H1 (cell line): ENCODE measurements at regions of chr5 and their contacts with region 1.

Region 1: DNA sequence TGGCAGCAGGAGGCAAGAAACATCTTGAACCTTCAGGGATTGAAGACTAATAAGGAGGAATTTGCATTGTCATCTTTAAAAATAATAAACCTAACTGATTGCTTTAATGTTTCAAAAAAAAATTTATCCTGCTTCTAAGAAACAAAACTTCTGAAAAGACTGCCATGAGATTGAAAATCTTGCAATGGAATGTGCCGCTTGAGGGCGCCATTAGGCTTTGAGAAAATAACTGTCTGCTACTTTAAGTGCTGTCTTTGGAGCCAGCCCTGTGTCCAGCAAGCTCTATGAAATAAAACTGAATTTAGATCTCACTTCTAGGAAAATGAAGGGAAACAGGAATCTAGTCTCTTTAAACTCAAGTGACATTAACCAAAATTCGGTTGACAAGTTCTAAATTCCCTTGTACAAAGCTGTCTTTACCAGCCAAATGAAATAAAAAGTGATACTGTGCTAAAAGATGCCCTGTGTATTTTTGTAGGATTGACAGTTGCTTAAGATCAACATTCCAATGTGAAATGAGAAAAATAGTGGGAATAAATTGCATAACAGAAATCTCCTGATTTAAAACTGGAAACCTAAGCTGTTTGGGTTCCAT is 79.4 kb downstream of the ESM1 start:
- DNase-seq: peak in 1 of 2 experiments; percentile 79
- H3K4me3 ChIP-seq: no peak overlapping the region
- H3K27ac ChIP-seq: no peak overlapping the region
- H3K4me1 ChIP-seq: no peaks in the 10 kb centered on the region
- H3K27me3 ChIP-seq: no peaks in the 10 kb centered on the region
- CTCF ChIP-seq: peak in 2 of 3 experiments; percentile 61 to 85; a peak in 3 of 4 replicates
- EP300 ChIP-seq: no peak
- POLR2A ChIP-seq: no peak
- RAD21 ChIP-seq: peak; percentile 90 to 91

Region 2: DNA sequence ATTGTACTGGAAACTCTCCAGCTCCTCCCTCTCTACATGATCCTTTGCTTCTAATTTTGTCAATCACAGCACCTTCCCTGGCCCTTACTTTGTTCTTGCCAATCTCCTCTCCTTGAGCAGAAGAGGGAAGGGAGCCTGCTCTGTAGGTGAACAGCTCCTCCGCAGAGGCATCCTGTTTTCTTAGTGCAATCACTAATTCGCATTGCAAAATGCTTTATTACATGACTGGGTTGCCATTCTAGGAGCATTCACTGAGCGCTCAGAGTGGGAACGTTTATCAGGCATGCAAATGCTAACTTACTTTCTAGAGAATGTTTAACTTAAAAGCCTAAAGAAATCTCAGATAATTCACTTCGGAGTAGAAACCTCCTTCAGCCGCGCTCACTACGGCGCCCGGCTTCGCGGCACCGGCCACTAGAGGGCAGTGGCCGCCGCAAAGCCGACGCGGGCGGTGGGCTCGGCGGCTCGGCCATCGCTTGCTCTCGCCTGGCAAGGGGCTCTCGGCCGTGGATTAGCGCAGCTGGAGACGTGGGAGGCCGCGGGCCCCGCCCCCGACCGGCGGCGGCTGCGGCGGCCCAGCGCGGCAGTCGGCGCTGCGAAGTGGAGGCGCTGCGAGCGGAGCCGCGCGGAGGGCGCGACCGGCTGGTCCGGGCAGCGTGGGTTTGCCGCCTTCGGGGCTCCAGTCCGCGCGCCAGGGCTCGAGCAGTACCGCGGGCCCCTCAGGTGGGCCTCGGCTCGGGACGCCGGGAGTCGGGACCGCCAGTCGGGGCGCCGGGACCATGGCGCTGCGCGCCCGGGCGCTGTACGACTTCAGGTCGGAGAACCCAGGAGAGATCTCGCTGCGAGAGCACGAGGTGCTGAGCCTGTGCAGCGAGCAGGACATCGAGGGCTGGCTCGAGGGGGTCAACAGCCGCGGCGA is 388.6 kb before region 1 on chr5 and contains the start of gene SNX18:
- CTCF ChIA-PET with region 1: interaction called, 10 read pairs
- POLR2A ChIA-PET with region 1: no interaction called
- DNase-seq: peak; percentile 71 to 91
- H3K4me3 ChIP-seq: peak within 1 kb of the TSS; percentile 44 to 75 (median 58)
- H3K27ac ChIP-seq: 0 out of 2 replicates have a peak within 1 kb of the TSS, but pooled peaks have one; percentile 28
- H3K4me1 ChIP-seq: peaks cover 0 to 13% (median 9%) of the 10 kb centered on the region in 4 experiments; a peak in 5 of 7 replicates
- H3K27me3 ChIP-seq: peaks cover 0 to 16% (median 12%) of the 10 kb centered on the region in 4 experiments; a peak in 5 of 7 replicates
- CTCF ChIP-seq: peak; percentile 81 to 97 (median 86)
- EP300 ChIP-seq: peak in 1 of 2 experiments; percentile 77; a peak in 1 of 3 replicates
- POLR2A ChIP-seq: peak in 1 of 2 experiments; percentile 56; a peak in 1 of 3 replicates
- RAD21 ChIP-seq: peak; percentile 91 to 97
- total RNA-seq, gene SNX18: 17.3 and 17.7 TPM in 2 replicates

Region 3: GRCh38 chr5:54883374-54884212 is 22.4 kb before region 1 on chr5:
- CTCF ChIA-PET with region 1: interaction called, 44 read pairs
- POLR2A ChIA-PET with region 1: no interaction called
- DNase-seq: peak; percentile 39 to 81
- H3K4me3 ChIP-seq: peak overlapping the region; percentile 54 to 74 (median 66)
- H3K27ac ChIP-seq: peak overlapping the region; percentile 27; the same call in 1 of the 2 replicates
- H3K4me1 ChIP-seq: peaks cover 2 to 8% (median 3%) of the 10 kb centered on the region in 4 experiments; a peak in 6 of 7 replicates
- H3K27me3 ChIP-seq: peaks cover 0 to 22% (median 13%) of the 10 kb centered on the region in 4 experiments; a peak in 6 of 7 replicates
- CTCF ChIP-seq: no peak
- EP300 ChIP-seq: no peak
- POLR2A ChIP-seq: peak in 1 of 2 experiments; percentile 44; a peak in 1 of 3 replicates
- RAD21 ChIP-seq: no peak

Region 4: GRCh38 chr5:54944364-54944763 is 38.3 kb after region 1 on chr5:
- CTCF ChIA-PET with region 1: interaction called, 13 read pairs
- POLR2A ChIA-PET with region 1: no interaction called
- DNase-seq: no peak
- H3K4me3 ChIP-seq: no peak overlapping the region
- H3K27ac ChIP-seq: no peak overlapping the region
- H3K4me1 ChIP-seq: no peaks in the 10 kb centered on the region
- H3K27me3 ChIP-seq: no peaks in the 10 kb centered on the region
- CTCF ChIP-seq: peak in 2 of 3 experiments; percentile 24 to 51; a peak in 2 of 4 replicates
- EP300 ChIP-seq: no peak
- POLR2A ChIP-seq: no peak
- RAD21 ChIP-seq: peak; percentile 34 to 38; a peak in 3 of 4 replicates

Region 5: GRCh38 chr5:55037046-55037771 is 131.2 kb after region 1 on chr5:
- CTCF ChIA-PET with region 1: interaction called, 35 read pairs
- POLR2A ChIA-PET with region 1: no interaction called
- DNase-seq: peak; percentile 10 to 46
- H3K4me3 ChIP-seq: no peak overlapping the region
- H3K27ac ChIP-seq: no peak overlapping the region
- H3K4me1 ChIP-seq: 0 out of 7 replicates have a peak, but pooled peaks cover 0 to 3% (median 0%) of the 10 kb centered on the region in 4 experiments
- H3K27me3 ChIP-seq: no peaks in the 10 kb centered on the region
- CTCF ChIP-seq: peak; percentile 9 to 56 (median 34)
- EP300 ChIP-seq: no peak
- POLR2A ChIP-seq: no peak
- RAD21 ChIP-seq: peak; percentile 41 to 54

Region 6: DNA sequence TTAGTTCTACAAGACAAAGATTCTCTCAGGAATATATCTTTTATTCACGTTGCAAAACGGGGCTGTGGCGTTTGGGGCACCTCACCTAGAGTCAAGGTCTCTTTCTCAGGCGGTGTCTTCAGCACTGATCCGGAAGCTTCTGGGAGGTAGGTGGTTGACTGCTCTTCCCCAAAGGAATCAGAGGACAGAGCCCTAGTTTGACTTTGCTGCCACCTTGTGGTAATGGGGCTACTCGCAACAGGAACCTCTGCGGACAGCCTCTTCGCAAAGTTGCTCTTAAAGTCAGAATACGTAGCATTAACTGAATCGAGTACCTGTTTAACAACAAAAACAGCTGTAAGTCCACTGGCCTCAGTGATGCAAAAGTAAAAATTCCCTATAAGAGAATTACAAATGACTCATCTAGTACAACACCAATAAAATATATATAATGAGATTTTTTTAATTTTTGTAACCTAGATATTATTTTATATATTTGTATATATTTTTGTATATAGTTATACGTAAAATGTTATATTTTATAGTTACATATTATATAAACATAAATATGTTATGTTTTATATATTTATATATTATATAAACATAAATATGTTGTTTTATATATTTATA is 240.6 kb after region 1 on chr5:
- CTCF ChIA-PET with region 1: interaction called, 59 read pairs
- POLR2A ChIA-PET with region 1: interaction called, 4 read pairs
- DNase-seq: peak; percentile 80 to 90
- H3K4me3 ChIP-seq: peak overlapping the region in 1 of 4 experiments; percentile 10; a peak in 1 of 8 replicates
- H3K27ac ChIP-seq: no peak overlapping the region
- H3K4me1 ChIP-seq: no peaks in the 10 kb centered on the region
- H3K27me3 ChIP-seq: no peaks in the 10 kb centered on the region
- CTCF ChIP-seq: peak; percentile 74 to 97 (median 92)
- EP300 ChIP-seq: no peak; a peak in 1 of 3 replicates
- POLR2A ChIP-seq: no peak
- RAD21 ChIP-seq: peak; percentile 99 to 100

Region 7: GRCh38 chr5:55159763-55160492 is 253.9 kb after region 1 on chr5 and contains the start of gene GPX8:
- CTCF ChIA-PET with region 1: interaction called, 93 read pairs
- POLR2A ChIA-PET with region 1: interaction called, 15 read pairs
- DNase-seq: no peak
- H3K4me3 ChIP-seq: peak within 1 kb of the TSS; percentile 47 to 78 (median 76)
- H3K27ac ChIP-seq: peak within 1 kb of the TSS; percentile 70
- H3K4me1 ChIP-seq: no peaks in the 10 kb centered on the region
- H3K27me3 ChIP-seq: no peaks in the 10 kb centered on the region
- CTCF ChIP-seq: peak in 2 of 3 experiments; percentile 50 to 60; a peak in 3 of 4 replicates
- EP300 ChIP-seq: no peak
- POLR2A ChIP-seq: peak; percentile 69 to 86
- RAD21 ChIP-seq: peak; percentile 85 to 87
- total RNA-seq, gene GPX8: 55.5 and 60.4 TPM in 2 replicates